ENCODE measurements at regions of chr17 and their contacts with region 1.

Region 1: DNA sequence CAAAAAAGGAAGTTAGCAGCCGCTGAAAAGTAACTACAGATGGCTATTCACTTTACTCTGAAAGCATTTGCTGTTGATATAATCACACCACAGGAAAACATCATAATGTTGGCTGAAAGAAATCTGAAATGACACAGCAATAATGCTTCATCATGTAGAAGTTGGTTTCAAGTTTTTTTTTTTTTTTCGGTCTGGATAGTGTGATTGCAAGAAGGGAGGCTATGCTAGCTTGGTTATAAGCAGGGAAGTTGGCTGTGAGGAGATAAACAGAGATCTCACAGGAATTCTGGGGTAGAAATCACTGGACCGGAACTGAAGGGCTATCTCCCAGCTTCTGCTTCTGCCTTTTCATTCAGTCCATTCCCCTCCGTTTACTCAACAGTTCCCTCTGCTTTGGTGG is 57.9 kb downstream of the MYO1D start:
- DNase-seq: peak; percentile 25 to 81 (median 48)
- ATAC-seq: peak; percentile 86
- H3K4me3 ChIP-seq: no peak overlapping the region
- H3K27ac ChIP-seq: peak overlapping the region; percentile 67; the same call in 2 of the 3 replicates
- H3K4me1 ChIP-seq: peaks cover 3 to 18% of the 10 kb centered on the region in 2 experiments
- H3K27me3 ChIP-seq: no peaks in the 10 kb centered on the region
- CTCF ChIP-seq: no peak
- EP300 ChIP-seq: peak; percentile 82
- POLR2A ChIP-seq: no peak
- RAD21 ChIP-seq: no peak

Region 2: GRCh38 chr17:32859857-32860525 is 41.0 kb after region 1 on chr17:
- CTCF ChIA-PET with region 1: no interaction called
- POLR2A ChIA-PET with region 1: no interaction called
- in situ Hi-C with region 1: no loop called
- intact Hi-C with region 1: loop called (anchors 5 kb)
- DNase-seq: peak; percentile 50 to 91 (median 66)
- ATAC-seq: peak; percentile 92
- H3K4me3 ChIP-seq: no peak overlapping the region
- H3K27ac ChIP-seq: peak overlapping the region; percentile 56
- H3K4me1 ChIP-seq: peaks cover 16 to 53% of the 10 kb centered on the region in 2 experiments
- H3K27me3 ChIP-seq: no peaks in the 10 kb centered on the region
- CTCF ChIP-seq: no peak
- EP300 ChIP-seq: peak; percentile 87
- POLR2A ChIP-seq: no peak
- RAD21 ChIP-seq: peak in 1 of 2 experiments; percentile 23; a peak in 1 of 4 replicates